ENCODE measurements at regions of chr1 and their contacts with region 1.

Region 1: GRCh38 chr1:109090196-109091077 is at the start of gene TMEM167B:
- DNase-seq: peak; percentile 84
- H3K4me3 Mint-ChIP-seq: peak within 1 kb of the TSS; percentile 92
- H3K27ac Mint-ChIP-seq: peak within 1 kb of the TSS; percentile 93
- H3K4me1 Mint-ChIP-seq: peaks cover 21% of the 10 kb centered on the region
- H3K27me3 Mint-ChIP-seq: peaks cover 2% of the 10 kb centered on the region
- total RNA-seq, gene TMEM167B: 26.2 and 27.6 TPM in 2 replicates

Region 2: DNA sequence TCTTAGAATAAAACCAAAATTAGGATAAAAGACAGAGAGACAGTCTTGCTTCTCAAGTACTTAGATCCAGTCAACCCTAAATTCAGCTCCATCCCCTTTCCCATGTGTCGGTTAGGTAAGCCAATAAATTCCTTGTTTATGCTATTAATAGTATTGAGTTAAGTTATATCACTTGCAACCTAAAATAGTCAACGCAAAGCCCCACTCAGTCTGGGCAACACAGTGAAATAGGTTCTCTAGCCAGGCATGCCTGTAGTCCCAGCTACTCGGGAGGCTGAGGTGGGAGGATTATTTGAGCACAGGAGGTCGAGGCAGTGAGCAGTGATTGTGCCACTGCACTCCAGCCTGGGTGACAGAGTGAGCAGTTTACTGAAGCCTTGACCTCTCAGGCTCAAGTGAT is 29.3 kb before region 1 on chr1:
- intact Hi-C with region 1: no loop called
- DNase-seq: no peak
- H3K4me3 Mint-ChIP-seq: no peak overlapping the region
- H3K27ac Mint-ChIP-seq: no peak overlapping the region
- H3K4me1 Mint-ChIP-seq: peaks cover 1% of the 10 kb centered on the region
- H3K27me3 Mint-ChIP-seq: peaks cover 4% of the 10 kb centered on the region

Region 3: DNA sequence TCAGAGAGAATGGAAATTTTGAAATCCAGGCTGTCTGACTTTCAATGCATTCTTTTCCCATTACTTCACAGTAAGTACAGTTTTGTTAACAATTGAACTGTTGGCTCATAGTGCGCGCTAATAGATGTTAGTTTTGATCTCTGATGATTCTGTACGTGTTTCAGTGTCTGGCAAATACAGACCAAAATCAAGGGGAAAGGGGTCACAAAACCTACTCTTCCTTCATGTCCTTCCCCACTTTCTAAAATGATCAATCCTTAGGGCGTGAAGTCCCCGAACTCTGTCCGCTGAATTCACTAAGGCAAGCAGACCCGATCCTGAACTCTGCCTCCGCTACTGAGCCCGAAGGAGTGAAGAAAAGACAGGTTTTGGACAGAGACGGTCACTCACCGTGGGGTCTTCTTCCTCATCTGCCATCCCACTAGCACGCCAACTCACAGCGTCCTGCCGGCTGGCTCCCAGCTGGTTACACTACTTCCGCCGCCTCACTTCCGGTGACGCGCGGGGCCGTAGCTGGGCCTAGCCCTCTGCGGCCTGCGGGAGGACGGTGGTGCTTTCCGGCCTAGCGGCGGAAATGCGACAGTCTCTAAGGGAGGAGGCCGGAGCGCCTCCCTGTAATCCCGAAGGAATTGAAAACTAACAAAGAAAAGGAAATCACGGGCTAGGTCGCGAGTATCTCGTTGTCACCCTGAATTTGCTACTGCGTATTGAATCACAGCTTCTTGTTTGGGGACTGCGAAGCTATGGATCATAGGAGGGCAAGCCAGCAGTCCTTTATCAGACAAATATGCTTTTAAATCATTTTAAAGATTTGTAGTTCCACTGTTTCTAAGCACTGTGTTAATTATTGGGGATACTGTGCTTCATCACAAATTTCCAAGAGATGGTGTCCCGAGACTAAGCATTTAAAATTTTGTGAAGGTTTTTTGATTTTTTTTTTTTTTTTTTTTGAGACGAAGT is 14.6 kb before region 1 on chr1 and contains the start of gene TAF13:
- intact Hi-C with region 1: loop called (anchors 1 kb)
- DNase-seq: peak; percentile 87
- H3K4me3 Mint-ChIP-seq: peak within 1 kb of the TSS; percentile 99
- H3K27ac Mint-ChIP-seq: peak within 1 kb of the TSS; percentile 88
- H3K4me1 Mint-ChIP-seq: peaks cover 20% of the 10 kb centered on the region
- H3K27me3 Mint-ChIP-seq: peaks cover 1% of the 10 kb centered on the region
- total RNA-seq, gene TAF13: 28.8 and 32.6 TPM in 2 replicates

Region 4: DNA sequence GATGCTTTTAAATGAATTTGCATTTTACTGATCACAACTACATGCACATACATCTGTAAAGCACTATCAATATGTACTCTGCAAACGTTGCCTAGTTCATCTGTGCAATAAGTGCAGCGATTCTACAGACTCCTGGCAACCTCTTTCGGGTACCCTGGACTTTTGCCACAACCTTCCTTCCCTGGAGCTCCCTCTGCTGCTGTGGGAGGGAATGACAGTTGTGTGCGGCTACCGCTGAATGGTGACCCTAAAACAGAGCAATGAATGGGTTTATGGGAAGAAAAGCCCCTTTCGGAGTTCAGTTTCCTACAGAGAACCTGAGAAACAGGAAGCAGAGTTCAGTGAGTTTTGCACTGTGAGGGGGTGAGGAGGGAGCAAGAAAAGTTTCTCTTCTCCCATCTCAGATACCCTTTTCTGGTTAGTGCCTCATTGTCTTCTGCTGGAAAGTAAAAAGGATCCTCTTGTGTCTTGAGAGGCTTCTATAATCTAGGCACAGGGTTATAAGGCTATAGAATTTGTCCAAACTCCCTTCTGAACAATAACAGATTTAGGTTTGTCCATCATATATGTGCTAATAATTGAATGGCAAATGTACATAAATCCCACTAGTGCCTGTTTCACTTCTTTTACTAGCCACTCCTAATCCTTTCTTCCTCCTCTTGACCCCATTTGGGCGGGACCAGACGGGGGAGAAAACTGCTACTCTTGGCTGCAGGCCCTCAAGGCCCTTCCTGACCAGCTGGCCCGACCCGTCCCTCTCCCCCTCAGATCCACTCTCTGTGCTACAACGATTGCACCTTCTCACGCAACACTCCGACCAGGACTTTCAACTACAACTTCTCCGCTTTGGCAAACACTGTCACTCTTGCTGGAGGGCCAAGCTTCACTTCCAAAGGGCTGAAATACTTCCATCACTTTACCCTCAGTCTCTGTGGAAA is 103.5 kb after region 1 on chr1:
- intact Hi-C with region 1: loop called (anchors 1 kb)
- DNase-seq: peak; percentile 55
- H3K4me3 Mint-ChIP-seq: no peak overlapping the region
- H3K27ac Mint-ChIP-seq: no peak overlapping the region
- H3K4me1 Mint-ChIP-seq: peaks cover 21% of the 10 kb centered on the region
- H3K27me3 Mint-ChIP-seq: no peaks in the 10 kb centered on the region

Measured in activated T-helper 1 cell treated with anti-CD3 and anti-CD28 coated beads, Interleukin-12 subunit alpha, Interleukin-12 subunit beta, Interleukin-2, Interleukin-4 antibody, amounts not matched to agents 30 ng/mL and 10 ng/mL and 1 ng/mL, durations not matched to agents 14 hours and 24 hours and 36 hours (primary cell).